ENCODE measurements at regions of chr10 and their contacts with region 1.

Region 1: DNA sequence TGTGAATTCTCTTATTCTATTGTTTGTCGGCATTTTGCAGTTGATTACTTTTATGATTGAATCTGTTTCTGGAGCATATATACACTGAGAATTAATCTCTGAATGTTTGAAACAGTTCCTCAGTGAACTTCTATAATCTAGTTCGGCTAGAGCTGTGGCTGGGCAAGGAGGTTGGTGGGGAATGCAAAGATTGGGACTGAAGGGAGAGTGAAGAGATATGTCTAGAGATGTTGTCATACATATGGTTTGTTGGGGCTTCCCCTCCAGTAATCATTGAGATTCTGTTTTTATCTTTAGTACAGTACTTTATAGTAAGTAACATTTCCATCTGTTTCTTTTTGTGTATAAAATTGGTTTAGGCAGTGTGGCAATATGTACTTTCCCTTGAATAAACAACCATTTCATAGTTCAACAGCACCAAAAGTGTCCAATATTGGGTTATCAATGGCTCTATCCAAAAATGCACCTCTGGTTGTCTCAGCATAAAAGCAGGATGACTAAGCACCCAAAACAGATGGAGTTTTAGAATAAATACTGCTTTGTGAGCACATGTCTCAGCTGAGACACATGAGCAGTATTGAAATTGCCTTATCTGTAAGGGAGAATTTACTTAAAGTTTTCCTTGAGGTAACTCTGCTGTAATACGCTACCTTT is 36.7 kb downstream of the WAC start:
- DNase-seq: peak in 1 of 3 donors; percentile 18
- H3K4me3 ChIP-seq: no peak overlapping the region
- H3K27ac ChIP-seq: no peak overlapping the region
- H3K4me1 ChIP-seq: peaks cover 0 to 10% (median 0%) of the 10 kb centered on the region in 4 experiments
- H3K27me3 ChIP-seq: no peaks in the 10 kb centered on the region

Region 2: GRCh38 chr10:28530751-28531150 is 38.9 kb before region 1 on chr10:
- CTCF ChIA-PET with region 1: no interaction called
- POLR2A ChIA-PET with region 1: no interaction called
- DNase-seq: no peak
- H3K4me3 ChIP-seq: peak overlapping the region in 1 of 7 experiments; percentile 79
- H3K27ac ChIP-seq: no peak overlapping the region
- H3K4me1 ChIP-seq: peaks cover 12 to 30% (median 18%) of the 10 kb centered on the region in 4 experiments
- H3K27me3 ChIP-seq: no peaks in the 10 kb centered on the region

Region 3: DNA sequence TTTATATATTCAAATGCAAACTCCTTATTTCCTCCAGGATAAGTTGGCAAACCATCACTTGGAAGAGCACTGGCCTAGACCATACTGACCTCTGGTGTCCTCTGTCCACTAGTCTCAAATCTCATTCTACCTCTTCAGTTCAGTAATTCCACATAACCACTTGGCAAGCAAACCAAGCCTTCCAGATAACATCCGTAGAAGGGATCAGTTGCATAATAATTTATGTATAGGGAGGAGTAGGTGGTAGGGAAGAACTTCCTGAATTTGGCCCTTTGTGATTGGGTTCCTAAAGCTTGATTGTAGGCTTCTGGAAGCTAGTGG is 18.3 kb after region 1 on chr10:
- CTCF ChIA-PET with region 1: interaction called, 12 read pairs
- POLR2A ChIA-PET with region 1: interaction called, 3 read pairs
- DNase-seq: no peak
- H3K4me3 ChIP-seq: no peak overlapping the region
- H3K27ac ChIP-seq: no peak overlapping the region
- H3K4me1 ChIP-seq: no peaks in the 10 kb centered on the region
- H3K27me3 ChIP-seq: no peaks in the 10 kb centered on the region